Naive thymus-derived CD4-positive, alpha-beta T cell (primary cell): ENCODE measurements at regions of chr3 and their contacts with region 1.

Region 1: GRCh38 chr3:50568947-50569749 is at the start of gene HEMK1:
- DNase-seq: peak; percentile 71 to 95 (median 90)
- ATAC-seq: peak; percentile 81
- H3K4me3 ChIP-seq: peak within 1 kb of the TSS; percentile 97
- H3K4me3 Mint-ChIP-seq: peak within 1 kb of the TSS; percentile 86 to 99 (median 96)
- H3K27ac ChIP-seq: peak within 1 kb of the TSS; percentile 84
- H3K27ac Mint-ChIP-seq: peak within 1 kb of the TSS; percentile 90 to 98 (median 93)
- H3K4me1 ChIP-seq: peaks cover 49 to 57% of the 10 kb centered on the region in 2 donors
- H3K4me1 Mint-ChIP-seq: peaks cover 37 to 75% (median 71%) of the 10 kb centered on the region in 7 donors
- H3K27me3 ChIP-seq: no peaks in the 10 kb centered on the region
- H3K27me3 Mint-ChIP-seq: no peaks in the 10 kb centered on the region
- total RNA-seq, gene HEMK1: 32.1 to 71.1 (median 66.1) TPM

Region 2: GRCh38 chr3:50192689-50193141 is 376.4 kb before region 1 on chr3:
- CTCF ChIA-PET with region 1: no interaction called
- POLR2A ChIA-PET with region 1: no interaction called
- intact Hi-C with region 1: loop called in 1 of 2 experiments (anchors 10 kb)
- DNase-seq: peak; percentile 73 to 90 (median 83)
- ATAC-seq: peak; percentile 53
- H3K4me3 ChIP-seq: no peak overlapping the region
- H3K4me3 Mint-ChIP-seq: peak overlapping the region in 7 of 10 donors; percentile 45 to 67 (median 62)
- H3K27ac ChIP-seq: no peak overlapping the region
- H3K27ac Mint-ChIP-seq: peak overlapping the region in 3 of 9 donors; percentile 51 to 70 (median 65)
- H3K4me1 ChIP-seq: peaks cover 5 to 13% of the 10 kb centered on the region in 2 donors
- H3K4me1 Mint-ChIP-seq: peaks cover 4 to 16% (median 9%) of the 10 kb centered on the region in 7 donors
- H3K27me3 ChIP-seq: no peaks in the 10 kb centered on the region
- H3K27me3 Mint-ChIP-seq: peaks cover 0 to 21% (median 5%) of the 10 kb centered on the region in 5 donors

Region 3: DNA sequence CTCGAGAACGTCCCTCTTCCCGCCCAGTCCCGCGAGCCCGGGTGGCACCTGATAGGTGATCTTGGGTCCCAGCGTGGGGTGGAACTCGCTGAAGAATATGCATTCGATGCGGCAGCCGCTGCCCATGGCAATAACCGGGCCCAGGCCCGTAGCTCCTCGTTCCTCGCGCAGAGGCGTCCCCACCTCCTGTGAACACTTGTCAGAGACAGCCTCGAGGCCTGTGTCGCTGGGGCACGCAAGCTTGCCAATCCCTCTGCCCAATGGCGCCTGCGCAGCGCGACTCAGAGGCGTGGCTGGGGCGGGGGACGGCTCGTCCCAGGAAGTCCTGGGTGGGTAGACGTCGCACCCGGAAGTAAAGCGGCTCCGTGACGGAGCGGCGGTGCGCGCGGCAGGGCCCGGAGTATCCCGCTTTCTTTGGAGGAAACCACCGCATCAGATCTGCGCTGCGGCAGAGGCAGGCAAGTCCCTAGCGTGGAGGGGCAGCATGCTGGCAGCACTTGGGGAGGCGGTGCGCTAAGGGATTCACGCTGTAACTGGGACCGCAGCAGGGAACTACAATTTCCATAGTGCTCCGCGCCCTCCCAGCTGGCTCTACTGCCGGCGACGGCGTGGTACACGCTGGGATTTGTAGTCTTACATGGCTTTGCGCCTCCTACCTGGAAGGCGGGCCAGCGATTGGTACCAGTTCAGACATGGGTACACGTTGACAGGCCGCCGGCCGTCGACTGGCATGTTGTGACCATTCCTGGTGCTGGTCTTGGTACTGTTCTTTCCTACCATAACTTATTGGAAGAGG is 218.4 kb before region 1 on chr3 and contains the starts of genes CYB561D2 and NPRL2:
- CTCF ChIA-PET with region 1: no interaction called
- POLR2A ChIA-PET with region 1: interaction called, 17 read pairs
- intact Hi-C with region 1: loop called in 1 of 2 experiments (anchors 2 kb)
- DNase-seq: peak; percentile 97 to 100 (median 99)
- ATAC-seq: peak; percentile 95
- H3K4me3 ChIP-seq: peak within 1 kb of the TSS; percentile 90
- H3K4me3 Mint-ChIP-seq: peak within 1 kb of the TSS; percentile 86 to 99 (median 96)
- H3K27ac ChIP-seq: peak within 1 kb of the TSS; percentile 93
- H3K27ac Mint-ChIP-seq: peak within 1 kb of the TSS; percentile 96 to 100 (median 99)
- H3K4me1 ChIP-seq: peaks cover 26 to 32% of the 10 kb centered on the region in 2 donors
- H3K4me1 Mint-ChIP-seq: peaks cover 24 to 78% (median 59%) of the 10 kb centered on the region in 7 donors
- H3K27me3 ChIP-seq: no peaks in the 10 kb centered on the region
- H3K27me3 Mint-ChIP-seq: no peaks in the 10 kb centered on the region
- total RNA-seq, gene CYB561D2: 23.3 to 42.6 (median 32.8) TPM
- total RNA-seq, gene NPRL2: 35.3 to 48.9 (median 47.7) TPM

Region 4: GRCh38 chr3:50503504-50504342 is 65.4 kb before region 1 on chr3 and contains the start of gene CACNA2D2:
- CTCF ChIA-PET with region 1: interaction called, 5 read pairs
- POLR2A ChIA-PET with region 1: no interaction called
- intact Hi-C with region 1: loop called in 1 of 2 experiments (anchors 1 kb)
- DNase-seq: peak; percentile 54 to 79 (median 74)
- ATAC-seq: peak; percentile 94
- H3K4me3 ChIP-seq: peak within 1 kb of the TSS; percentile 44
- H3K4me3 Mint-ChIP-seq: peak within 1 kb of the TSS; percentile 37 to 85 (median 76)
- H3K27ac ChIP-seq: peak within 1 kb of the TSS; percentile 45
- H3K27ac Mint-ChIP-seq: peak within 1 kb of the TSS in 5 of 9 donors; percentile 19 to 71 (median 43)
- H3K4me1 ChIP-seq: peaks cover 0 to 5% of the 10 kb centered on the region in 2 donors
- H3K4me1 Mint-ChIP-seq: peaks cover 0 to 15% (median 10%) of the 10 kb centered on the region in 7 donors
- H3K27me3 ChIP-seq: peaks cover 0 to 5% of the 10 kb centered on the region in 2 donors
- H3K27me3 Mint-ChIP-seq: peaks cover 11 to 56% (median 21%) of the 10 kb centered on the region in 5 donors
- total RNA-seq, gene CACNA2D2: 0.97 to 6.2 (median 2.5) TPM

Region 5: GRCh38 chr3:50587806-50588758 is 18.9 kb after region 1 on chr3:
- CTCF ChIA-PET with region 1: interaction called, 94 read pairs
- POLR2A ChIA-PET with region 1: interaction called, 130 read pairs
- intact Hi-C with region 1: loop called (anchors 1 kb)
- DNase-seq: peak in 1 of 9 donors; percentile 80
- ATAC-seq: peak; percentile 62
- H3K4me3 ChIP-seq: no peak overlapping the region
- H3K4me3 Mint-ChIP-seq: peak overlapping the region; percentile 25 to 69 (median 58)
- H3K27ac ChIP-seq: peak overlapping the region; percentile 62
- H3K27ac Mint-ChIP-seq: peak overlapping the region; percentile 67 to 95 (median 83)
- H3K4me1 ChIP-seq: peaks cover 42 to 55% of the 10 kb centered on the region in 2 donors
- H3K4me1 Mint-ChIP-seq: peaks cover 30 to 88% (median 60%) of the 10 kb centered on the region in 7 donors
- H3K27me3 ChIP-seq: no peaks in the 10 kb centered on the region
- H3K27me3 Mint-ChIP-seq: no peaks in the 10 kb centered on the region

Region 6: GRCh38 chr3:50971487-50971924 is 402.4 kb after region 1 on chr3:
- CTCF ChIA-PET with region 1: interaction called, 4 read pairs
- POLR2A ChIA-PET with region 1: no interaction called
- intact Hi-C with region 1: loop called in 1 of 2 experiments (anchors 5 kb)
- DNase-seq: peak in 8 of 9 donors; percentile 37 to 83 (median 78)
- ATAC-seq: peak; percentile 99
- H3K4me3 ChIP-seq: no peak overlapping the region
- H3K4me3 Mint-ChIP-seq: peak overlapping the region in 2 of 10 donors; percentile 15 to 45
- H3K27ac ChIP-seq: no peak overlapping the region
- H3K27ac Mint-ChIP-seq: peak overlapping the region in 7 of 9 donors; percentile 12 to 77 (median 67)
- H3K4me1 ChIP-seq: peaks cover 9 to 14% of the 10 kb centered on the region in 2 donors
- H3K4me1 Mint-ChIP-seq: peaks cover 0 to 21% (median 13%) of the 10 kb centered on the region in 7 donors
- H3K27me3 ChIP-seq: no peaks in the 10 kb centered on the region
- H3K27me3 Mint-ChIP-seq: peaks cover 0 to 3% (median 0%) of the 10 kb centered on the region in 5 donors

Region 7: GRCh38 chr3:51031666-51032065 is 462.5 kb after region 1 on chr3:
- CTCF ChIA-PET with region 1: no interaction called
- POLR2A ChIA-PET with region 1: no interaction called
- intact Hi-C with region 1: no loop called
- DNase-seq: no peak
- ATAC-seq: no peak
- H3K4me3 ChIP-seq: no peak overlapping the region
- H3K4me3 Mint-ChIP-seq: no peak overlapping the region
- H3K27ac ChIP-seq: no peak overlapping the region
- H3K27ac Mint-ChIP-seq: no peak overlapping the region
- H3K4me1 ChIP-seq: peaks cover 5 to 13% of the 10 kb centered on the region in 2 donors
- H3K4me1 Mint-ChIP-seq: peaks cover under 1 to 43% (median 30%) of the 10 kb centered on the region in 7 donors
- H3K27me3 ChIP-seq: no peaks in the 10 kb centered on the region
- H3K27me3 Mint-ChIP-seq: peaks cover 0 to 16% (median 0%) of the 10 kb centered on the region in 5 donors

Region 8: GRCh38 chr3:51498876-51499738 is 930.0 kb after region 1 on chr3:
- CTCF ChIA-PET with region 1: interaction called, 4 read pairs
- POLR2A ChIA-PET with region 1: no interaction called
- intact Hi-C with region 1: loop called in 1 of 2 experiments (anchors 5 kb)
- DNase-seq: peak; percentile 52 to 90 (median 73)
- ATAC-seq: peak; percentile 58
- H3K4me3 ChIP-seq: peak overlapping the region; percentile 84
- H3K4me3 Mint-ChIP-seq: peak overlapping the region; percentile 87 to 100 (median 98)
- H3K27ac ChIP-seq: peak overlapping the region; percentile 90
- H3K27ac Mint-ChIP-seq: peak overlapping the region; percentile 90 to 99 (median 94)
- H3K4me1 ChIP-seq: peaks cover 10 to 14% of the 10 kb centered on the region in 2 donors
- H3K4me1 Mint-ChIP-seq: peaks cover 4 to 38% (median 35%) of the 10 kb centered on the region in 7 donors
- H3K27me3 ChIP-seq: no peaks in the 10 kb centered on the region
- H3K27me3 Mint-ChIP-seq: peaks cover 0 to 2% (median 0%) of the 10 kb centered on the region in 5 donors